ENCODE measurements at regions of chr6 and their contacts with region 1.

Region 1: DNA sequence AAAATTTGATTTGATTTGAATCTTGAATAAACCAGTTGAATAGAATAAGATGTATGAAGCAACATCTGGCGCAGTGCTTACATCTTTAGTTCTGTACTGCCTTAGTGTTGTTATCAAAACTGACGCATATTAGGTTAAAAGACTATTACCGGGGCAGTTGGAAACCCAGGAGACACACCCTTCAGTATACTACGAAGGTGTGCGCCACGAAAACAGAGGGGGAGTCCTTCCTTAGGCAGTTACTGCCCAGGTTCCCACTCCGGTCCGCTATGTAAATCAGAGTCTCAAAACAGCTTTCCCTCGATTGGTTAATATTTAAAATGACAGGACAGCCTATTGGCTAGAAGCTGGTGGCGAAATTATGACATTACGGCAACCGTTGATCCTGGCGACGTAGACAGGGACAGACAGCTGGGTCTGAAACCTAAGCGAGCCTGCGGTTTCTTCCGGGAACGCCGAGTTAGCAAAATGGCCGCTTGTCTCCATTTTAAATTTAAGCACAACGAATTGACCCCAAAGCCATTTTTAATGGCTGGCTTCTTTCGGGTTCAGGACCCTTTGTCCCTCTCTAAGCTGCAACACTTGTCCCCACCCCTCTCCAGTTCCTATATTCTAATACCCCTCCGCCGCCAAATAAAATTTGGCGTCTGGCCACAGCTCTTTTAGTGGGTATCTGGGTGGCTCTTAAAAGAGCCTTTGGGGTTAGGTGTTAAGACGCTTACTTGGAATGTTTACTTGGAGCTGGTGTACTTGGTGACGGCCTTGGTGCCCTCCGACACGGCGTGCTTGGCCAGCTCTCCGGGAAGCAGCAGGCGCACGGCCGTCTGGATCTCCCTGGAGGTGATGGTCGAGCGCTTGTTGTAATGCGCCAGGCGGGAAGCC is 35.8 kb downstream of the HFE start:
- DNase-seq: peak; percentile 98
- H3K4me3 Mint-ChIP-seq: peak overlapping the region; percentile 97
- H3K27ac Mint-ChIP-seq: peak overlapping the region; percentile 99
- H3K4me1 Mint-ChIP-seq: peaks cover 36% of the 10 kb centered on the region
- H3K27me3 Mint-ChIP-seq: peaks cover 6% of the 10 kb centered on the region

Region 2: GRCh38 chr6:26025894-26026832 is 96.9 kb before region 1 on chr6:
- CTCF ChIA-PET with region 1: no interaction called
- intact Hi-C with region 1: loop called (anchors 1 kb)
- DNase-seq: peak; percentile 98
- H3K4me3 Mint-ChIP-seq: peak overlapping the region; percentile 87
- H3K27ac Mint-ChIP-seq: peak overlapping the region; percentile 99
- H3K4me1 Mint-ChIP-seq: peaks cover 31% of the 10 kb centered on the region
- H3K27me3 Mint-ChIP-seq: no peaks in the 10 kb centered on the region

Region 3: GRCh38 chr6:26103770-26104456 is 19.1 kb before region 1 on chr6:
- CTCF ChIA-PET with region 1: interaction called, 4 read pairs
- intact Hi-C with region 1: loop called (anchors 1 kb)
- DNase-seq: peak; percentile 87
- H3K4me3 Mint-ChIP-seq: peak overlapping the region; percentile 80
- H3K27ac Mint-ChIP-seq: peak overlapping the region; percentile 94
- H3K4me1 Mint-ChIP-seq: peaks cover 18% of the 10 kb centered on the region
- H3K27me3 Mint-ChIP-seq: peaks cover 2% of the 10 kb centered on the region

Region 4: GRCh38 chr6:26196846-26197648 is 74.0 kb after region 1 on chr6:
- CTCF ChIA-PET with region 1: interaction called, 3 read pairs
- intact Hi-C with region 1: loop called (anchors 1 kb)
- DNase-seq: peak; percentile 86
- H3K4me3 Mint-ChIP-seq: peak overlapping the region; percentile 96
- H3K27ac Mint-ChIP-seq: peak overlapping the region; percentile 99
- H3K4me1 Mint-ChIP-seq: peaks cover 36% of the 10 kb centered on the region
- H3K27me3 Mint-ChIP-seq: peaks cover 5% of the 10 kb centered on the region

Region 5: DNA sequence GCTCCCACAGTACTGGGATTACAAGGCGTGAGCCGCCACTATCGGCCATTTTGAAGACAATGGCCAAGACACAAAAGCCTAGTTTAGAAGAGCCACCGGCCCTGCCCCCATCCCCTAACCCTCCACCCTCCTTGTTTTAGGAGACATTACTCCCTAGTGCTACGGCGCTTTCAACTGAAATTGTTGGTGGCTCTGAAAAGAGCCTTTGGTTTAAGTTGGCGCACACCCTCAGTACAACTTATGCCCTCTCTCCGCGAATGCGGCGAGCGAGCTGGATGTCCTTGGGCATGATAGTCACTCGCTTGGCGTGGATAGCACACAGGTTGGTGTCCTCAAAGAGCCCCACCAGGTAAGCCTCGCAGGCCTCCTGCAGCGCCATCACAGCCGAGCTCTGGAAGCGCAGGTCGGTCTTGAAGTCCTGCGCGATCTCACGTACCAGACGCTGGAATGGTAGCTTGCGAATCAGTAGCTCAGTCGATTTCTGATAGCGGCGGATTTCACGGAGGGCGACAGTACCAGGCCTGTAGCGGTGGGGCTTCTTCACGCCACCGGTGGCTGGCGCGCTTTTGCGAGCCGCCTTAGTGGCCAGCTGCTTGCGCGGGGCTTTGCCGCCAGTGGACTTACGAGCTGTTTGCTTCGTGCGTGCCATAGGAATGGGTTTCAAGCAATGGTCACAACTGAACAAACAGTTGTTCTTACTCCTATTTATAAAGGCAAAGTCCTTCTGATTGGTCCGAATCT is 127.1 kb after region 1 on chr6:
- CTCF ChIA-PET with region 1: no interaction called
- intact Hi-C with region 1: loop called (anchors 1 kb)
- DNase-seq: peak; percentile 82
- H3K4me3 Mint-ChIP-seq: peak overlapping the region; percentile 86
- H3K27ac Mint-ChIP-seq: peak overlapping the region; percentile 100
- H3K4me1 Mint-ChIP-seq: peaks cover 17% of the 10 kb centered on the region
- H3K27me3 Mint-ChIP-seq: no peaks in the 10 kb centered on the region

Region 6: GRCh38 chr6:26596579-26597388 is 473.8 kb after region 1 on chr6 and contains the start of gene ABT1:
- CTCF ChIA-PET with region 1: no interaction called
- intact Hi-C with region 1: loop called (anchors 5 kb)
- DNase-seq: peak; percentile 99
- H3K4me3 Mint-ChIP-seq: no peak within 1 kb of the TSS
- H3K27ac Mint-ChIP-seq: no peak within 1 kb of the TSS
- H3K4me1 Mint-ChIP-seq: peaks cover 53% of the 10 kb centered on the region
- H3K27me3 Mint-ChIP-seq: peaks cover 24% of the 10 kb centered on the region
- total RNA-seq, gene ABT1: 17.3 to 18.4 TPM

Region 7: GRCh38 chr6:27871924-27872638 is 1749.0 kb after region 1 on chr6:
- CTCF ChIA-PET with region 1: no interaction called
- intact Hi-C with region 1: loop called (anchors 1 kb)
- DNase-seq: peak; percentile 81
- H3K4me3 Mint-ChIP-seq: peak overlapping the region; percentile 91
- H3K27ac Mint-ChIP-seq: peak overlapping the region; percentile 97
- H3K4me1 Mint-ChIP-seq: peaks cover 34% of the 10 kb centered on the region
- H3K27me3 Mint-ChIP-seq: peaks cover 8% of the 10 kb centered on the region

Measured in activated naive CD4-positive, alpha-beta T cell treated with anti-CD3 and anti-CD28 coated beads for 36 hours (primary cell).